ENCODE measurements at regions of chr13 and their contacts with region 1.

Region 1: DNA sequence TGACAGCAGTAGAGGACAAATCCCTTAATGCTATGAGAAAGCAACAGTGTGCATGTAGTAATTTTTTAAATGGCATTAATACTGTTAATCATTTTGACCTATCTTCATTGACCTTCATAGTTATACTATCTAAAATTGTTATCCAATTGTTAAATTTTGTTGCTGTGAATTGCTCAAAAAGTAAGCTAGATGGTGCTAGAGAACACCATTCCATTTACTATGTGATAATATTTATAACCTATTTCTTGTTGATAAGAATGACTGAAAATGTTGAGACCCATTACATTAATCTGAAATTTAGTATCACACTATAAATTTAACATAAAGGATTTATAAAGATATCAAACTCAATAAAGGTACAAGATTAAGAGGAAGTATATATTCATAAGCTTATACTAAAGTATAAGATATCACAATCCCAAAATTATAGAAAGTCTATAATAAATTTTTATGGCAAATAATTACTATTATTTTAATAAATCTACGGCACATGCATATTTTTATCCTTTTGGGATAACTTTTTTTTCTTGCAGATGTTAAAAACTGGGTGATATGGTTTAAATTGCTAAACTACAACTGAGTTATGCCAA is 1573.3 kb downstream of the PCDH9 start:
- DNase-seq: no peak
- H3K4me3 ChIP-seq: no peak overlapping the region
- H3K27ac ChIP-seq: no peak overlapping the region
- H3K4me1 ChIP-seq: no peaks in the 10 kb centered on the region
- H3K27me3 ChIP-seq: no peaks in the 10 kb centered on the region
- CTCF ChIP-seq: peak; percentile 70

Region 2: DNA sequence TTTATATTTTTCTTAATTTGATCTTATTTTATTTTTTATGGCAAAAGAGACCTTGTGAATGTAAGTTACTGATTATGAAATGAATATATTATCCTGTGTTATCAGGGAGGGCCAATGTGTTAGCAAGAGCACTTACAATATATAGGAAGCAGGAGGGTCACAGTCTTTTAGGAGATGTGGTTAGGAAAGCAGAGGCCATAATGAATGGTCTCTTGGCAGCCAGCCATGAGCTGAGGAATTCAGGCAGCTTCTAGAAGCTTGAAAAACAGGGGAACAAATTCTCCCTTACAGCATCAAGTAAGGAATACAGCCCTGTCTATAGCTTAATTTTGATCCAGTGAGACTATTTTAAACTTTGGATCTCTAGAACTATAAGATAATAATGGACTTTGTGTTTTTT is 801.3 kb before region 1 on chr13:
- CTCF ChIA-PET with region 1: no interaction called
- POLR2A ChIA-PET with region 1: no interaction called
- intact Hi-C with region 1: no loop called
- DNase-seq: no peak
- H3K4me3 ChIP-seq: no peak overlapping the region
- H3K27ac ChIP-seq: no peak overlapping the region
- H3K4me1 ChIP-seq: peaks cover 8% of the 10 kb centered on the region; the same call in 1 of the 2 replicates
- H3K27me3 ChIP-seq: no peaks in the 10 kb centered on the region
- CTCF ChIP-seq: no peak

Region 3: DNA sequence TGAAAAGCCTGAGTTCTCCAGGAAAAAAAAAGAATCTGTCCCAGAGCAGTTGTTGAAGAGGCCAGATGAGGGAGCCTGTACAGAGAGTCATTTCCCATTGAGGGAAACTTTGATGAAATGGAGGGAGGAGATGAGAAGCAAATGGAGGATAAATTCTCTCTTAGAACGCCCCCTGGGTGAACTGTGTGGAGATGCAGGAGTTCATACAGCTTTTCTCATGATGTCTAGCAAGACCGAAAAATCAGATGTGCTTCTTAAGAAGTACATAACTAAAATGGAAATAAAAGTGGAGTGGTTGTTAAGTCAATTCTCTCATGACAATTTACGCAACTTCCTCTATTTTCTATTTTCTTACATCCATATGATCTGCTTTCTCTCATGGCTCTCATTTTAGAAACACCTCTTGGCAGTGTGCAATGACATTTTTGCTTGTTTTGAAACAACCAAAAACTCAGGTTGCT is 310.2 kb after region 1 on chr13:
- CTCF ChIA-PET with region 1: no interaction called
- POLR2A ChIA-PET with region 1: no interaction called
- intact Hi-C with region 1: loop called (anchors 10 kb)
- DNase-seq: peak in 1 of 2 experiments; percentile 6
- H3K4me3 ChIP-seq: no peak overlapping the region
- H3K27ac ChIP-seq: no peak overlapping the region
- H3K4me1 ChIP-seq: no peaks in the 10 kb centered on the region
- H3K27me3 ChIP-seq: no peaks in the 10 kb centered on the region
- CTCF ChIP-seq: peak; percentile 34

Region 4: GRCh38 chr13:66009241-66009640 is 352.4 kb after region 1 on chr13:
- CTCF ChIA-PET with region 1: no interaction called
- POLR2A ChIA-PET with region 1: no interaction called
- intact Hi-C with region 1: no loop called
- DNase-seq: no peak
- H3K4me3 ChIP-seq: no peak overlapping the region
- H3K27ac ChIP-seq: no peak overlapping the region
- H3K4me1 ChIP-seq: no peaks in the 10 kb centered on the region
- H3K27me3 ChIP-seq: no peaks in the 10 kb centered on the region
- CTCF ChIP-seq: no peak

Region 5: DNA sequence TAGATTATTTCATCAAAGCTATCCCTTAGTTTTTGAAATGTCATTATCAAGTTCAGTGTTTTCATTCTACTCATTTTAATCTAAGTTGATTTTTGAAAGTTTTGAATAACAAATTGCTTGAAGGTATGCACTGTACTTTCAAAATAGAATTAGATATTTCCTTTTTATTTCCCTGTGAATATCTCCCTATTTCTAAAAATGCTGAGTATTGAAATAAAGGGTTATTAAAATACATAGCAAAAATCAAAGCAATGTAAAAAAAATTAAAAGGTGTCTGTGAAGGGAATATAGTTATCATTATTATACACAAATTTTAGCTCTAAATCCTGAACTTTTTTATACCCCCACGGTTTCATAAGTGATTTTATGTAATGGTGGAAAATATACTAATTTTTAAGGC is 605.5 kb after region 1 on chr13:
- CTCF ChIA-PET with region 1: no interaction called
- POLR2A ChIA-PET with region 1: no interaction called
- intact Hi-C with region 1: no loop called
- DNase-seq: no peak
- H3K4me3 ChIP-seq: no peak overlapping the region
- H3K27ac ChIP-seq: no peak overlapping the region
- H3K4me1 ChIP-seq: no peaks in the 10 kb centered on the region
- H3K27me3 ChIP-seq: no peaks in the 10 kb centered on the region
- CTCF ChIP-seq: no peak

Measured in PC-9 (cell line).